WTC11 (cell line): ENCODE measurements at regions of chr2 and their contacts with region 1.

Region 1: DNA sequence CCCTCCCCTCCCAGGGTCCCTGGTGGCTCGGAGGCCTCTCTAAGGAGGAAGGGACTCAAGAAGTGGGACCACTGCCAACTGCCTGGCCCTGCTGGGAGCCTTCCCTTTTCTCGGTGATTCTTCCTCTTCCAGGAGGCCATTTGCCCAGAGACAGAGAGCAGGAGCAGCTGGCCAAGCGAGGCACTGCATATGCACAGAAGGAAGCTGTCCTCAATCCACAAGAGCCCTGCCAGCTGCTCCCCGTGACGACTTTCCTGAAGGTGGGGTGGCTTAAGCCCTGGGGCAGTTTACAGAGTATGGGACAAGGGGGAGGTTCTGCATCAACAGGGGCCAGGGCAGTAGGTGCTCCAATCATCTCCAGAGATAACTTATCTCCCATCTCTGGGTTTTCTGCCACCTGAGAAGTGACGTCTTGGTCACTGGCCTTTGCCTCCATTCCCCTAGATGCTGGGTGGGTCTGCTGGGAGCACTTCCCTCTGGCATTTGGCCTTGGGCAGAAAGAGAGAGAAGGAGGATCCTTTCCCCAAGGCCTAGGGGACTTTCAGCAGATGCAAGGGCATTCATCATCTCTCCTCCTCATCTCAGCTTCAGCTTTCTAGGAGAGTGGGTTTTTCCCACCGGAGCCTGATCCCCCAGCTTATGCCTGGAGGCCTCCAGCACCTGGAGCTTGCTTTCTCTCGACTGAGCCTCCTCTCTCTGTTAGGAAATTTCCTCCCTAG is 28.5 kb downstream of the CIB4 start:
- DNase-seq: no peak
- ATAC-seq: no peak
- H3K4me3 Mint-ChIP-seq: no peak overlapping the region
- H3K27ac Mint-ChIP-seq: no peak overlapping the region
- H3K4me1 Mint-ChIP-seq: peaks cover 27% of the 10 kb centered on the region
- H3K27me3 Mint-ChIP-seq: peaks cover 2% of the 10 kb centered on the region; the same call in 1 of the 2 replicates
- CTCF ChIP-seq: no peak

Region 2: DNA sequence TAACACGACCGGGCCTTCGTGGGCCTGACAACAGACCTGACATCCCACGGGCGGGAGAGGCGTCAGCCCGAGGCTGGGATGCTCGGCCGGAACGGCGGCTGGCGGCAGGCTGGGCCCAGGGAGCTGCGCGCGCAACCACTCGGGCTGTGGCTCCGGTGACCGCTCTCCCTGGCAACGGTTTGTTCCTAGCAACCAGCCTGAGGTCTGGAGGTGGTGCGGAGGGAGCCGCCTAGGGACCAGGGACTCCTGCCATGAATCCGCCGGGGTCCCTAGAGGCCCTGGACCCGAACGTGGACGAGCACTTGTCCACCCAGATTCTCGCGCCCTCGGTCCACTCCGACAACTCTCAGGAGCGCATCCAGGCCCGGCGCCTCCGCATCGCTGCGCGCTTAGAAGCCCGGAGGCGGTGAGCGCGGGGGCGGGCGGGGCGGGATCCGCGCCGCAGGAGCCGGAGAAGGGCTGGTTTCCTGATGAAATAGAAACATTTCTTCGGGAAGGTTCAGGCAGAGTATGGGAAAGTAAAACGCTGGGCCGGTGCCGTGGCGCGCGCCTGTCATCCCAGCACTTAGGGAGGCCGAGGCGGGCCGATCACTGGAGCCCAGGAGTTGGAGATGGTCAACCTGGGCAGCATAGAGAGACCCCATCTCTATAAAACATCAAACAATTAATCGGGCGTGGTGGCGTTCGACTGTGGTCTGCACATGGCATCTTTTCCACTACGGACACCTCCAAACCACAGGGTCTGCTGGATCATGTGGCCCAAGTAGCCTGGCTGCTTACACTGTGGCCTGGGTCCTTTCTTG is 210.7 kb before region 1 on chr2 and contains the start of gene DRC1:
- CTCF ChIA-PET with region 1: no interaction called
- POLR2A ChIA-PET with region 1: no interaction called
- DNase-seq: peak; percentile 93
- ATAC-seq: peak; percentile 97
- H3K4me3 Mint-ChIP-seq: peak within 1 kb of the TSS; percentile 61
- H3K27ac Mint-ChIP-seq: no peak within 1 kb of the TSS
- H3K4me1 Mint-ChIP-seq: peaks cover 3% of the 10 kb centered on the region; the same call in 1 of the 2 replicates
- H3K27me3 Mint-ChIP-seq: peaks cover 10% of the 10 kb centered on the region; the same call in 1 of the 2 replicates
- CTCF ChIP-seq: no peak
- total RNA-seq, gene DRC1: 0.55 TPM in 1 of 3 replicates, not detected in the others

Region 3: GRCh38 chr2:26414311-26414710 is 198.4 kb before region 1 on chr2:
- CTCF ChIA-PET with region 1: no interaction called
- POLR2A ChIA-PET with region 1: no interaction called
- DNase-seq: no peak
- ATAC-seq: no peak
- H3K4me3 Mint-ChIP-seq: no peak overlapping the region
- H3K27ac Mint-ChIP-seq: no peak overlapping the region
- H3K4me1 Mint-ChIP-seq: no peaks in the 10 kb centered on the region
- H3K27me3 Mint-ChIP-seq: no peaks in the 10 kb centered on the region
- CTCF ChIP-seq: no peak

Region 4: DNA sequence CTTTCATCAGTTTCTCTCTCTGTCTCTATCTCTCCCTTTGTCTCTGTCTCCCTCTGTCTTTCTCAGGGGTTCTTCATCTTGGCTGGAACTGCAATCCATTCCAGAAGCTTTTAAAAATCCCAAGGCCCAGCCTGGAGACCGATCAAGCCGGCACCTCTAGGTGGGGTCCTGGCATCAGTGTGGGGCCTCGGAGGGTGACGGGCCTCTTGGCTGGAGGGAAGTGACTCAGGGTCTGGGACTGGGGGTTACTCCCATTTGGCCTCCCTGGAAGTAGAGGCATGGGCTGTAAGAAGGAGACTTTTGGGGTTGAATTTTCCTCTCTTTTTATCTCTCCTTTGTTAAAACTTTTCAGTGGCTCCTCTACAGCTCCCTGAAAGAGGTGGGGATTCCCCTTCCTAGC is 82.0 kb before region 1 on chr2:
- CTCF ChIA-PET with region 1: no interaction called
- POLR2A ChIA-PET with region 1: no interaction called
- DNase-seq: no peak
- ATAC-seq: no peak
- H3K4me3 Mint-ChIP-seq: no peak overlapping the region
- H3K27ac Mint-ChIP-seq: no peak overlapping the region
- H3K4me1 Mint-ChIP-seq: no peaks in the 10 kb centered on the region
- H3K27me3 Mint-ChIP-seq: no peaks in the 10 kb centered on the region; the same call in 1 of the 2 replicates
- CTCF ChIP-seq: no peak

Region 5: DNA sequence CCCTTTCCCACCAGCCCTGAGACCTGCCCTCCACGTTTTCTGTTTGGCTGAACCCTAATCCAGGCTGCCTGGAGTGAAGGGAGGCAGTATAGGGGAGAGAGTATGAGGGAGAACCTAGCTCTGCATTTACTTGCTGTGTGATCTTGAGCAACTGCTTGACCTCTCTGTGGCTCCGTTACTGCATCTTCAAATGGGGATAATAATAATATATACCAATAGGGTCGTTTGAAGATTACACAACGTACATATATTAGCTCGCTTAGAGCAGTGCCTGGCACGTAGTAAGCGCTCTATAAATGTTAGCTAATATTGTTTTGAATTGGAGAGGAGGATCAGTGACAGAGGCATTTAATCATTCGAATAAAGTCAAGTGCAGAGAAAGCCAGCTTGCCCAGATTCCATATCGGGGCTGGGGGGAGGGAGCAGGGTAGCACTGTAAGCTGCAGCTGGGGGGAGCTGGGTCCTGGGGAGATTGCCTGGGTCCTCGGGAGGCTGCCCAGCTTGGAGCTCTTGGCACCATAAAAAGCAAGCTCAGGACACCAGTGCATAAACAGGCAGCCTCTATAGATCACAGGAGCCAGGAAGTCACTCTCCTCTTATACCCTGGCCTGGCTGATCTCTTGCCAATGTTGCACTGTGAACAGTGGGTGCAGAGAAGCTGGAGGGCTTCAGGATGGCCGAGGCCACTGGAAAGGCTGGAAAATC is 98.9 kb after region 1 on chr2:
- CTCF ChIA-PET with region 1: interaction called, 11 read pairs
- POLR2A ChIA-PET with region 1: no interaction called
- DNase-seq: no peak
- ATAC-seq: no peak
- H3K4me3 Mint-ChIP-seq: no peak overlapping the region
- H3K27ac Mint-ChIP-seq: no peak overlapping the region
- H3K4me1 Mint-ChIP-seq: peaks cover 4% of the 10 kb centered on the region; the same call in 1 of the 2 replicates
- H3K27me3 Mint-ChIP-seq: no peaks in the 10 kb centered on the region; the same call in 1 of the 2 replicates
- CTCF ChIP-seq: no peak